ENCODE measurements at regions of chr4 and their contacts with region 1.

Region 1: GRCh38 chr4:70687821-70688794 is at the start of gene UTP3:
- DNase-seq: peak; percentile 93
- ATAC-seq: peak; percentile 93
- H3K4me3 Mint-ChIP-seq: peak within 1 kb of the TSS; percentile 99
- H3K27ac Mint-ChIP-seq: peak within 1 kb of the TSS; percentile 95
- H3K4me1 Mint-ChIP-seq: peaks cover 30% of the 10 kb centered on the region
- H3K27me3 Mint-ChIP-seq: no peaks in the 10 kb centered on the region
- total RNA-seq, gene UTP3: 28.0 to 33.6 TPM

Region 2: GRCh38 chr4:70704331-70705145 is 16.4 kb after region 1 on chr4:
- CTCF ChIA-PET with region 1: interaction called, 39 read pairs
- DNase-seq: peak; percentile 74
- ATAC-seq: peak; percentile 62
- H3K4me3 Mint-ChIP-seq: peak overlapping the region; percentile 77
- H3K27ac Mint-ChIP-seq: peak overlapping the region; percentile 71
- H3K4me1 Mint-ChIP-seq: peaks cover 20% of the 10 kb centered on the region
- H3K27me3 Mint-ChIP-seq: no peaks in the 10 kb centered on the region

Region 3: GRCh38 chr4:70754990-70755688 is 67.0 kb after region 1 on chr4:
- CTCF ChIA-PET with region 1: no interaction called
- DNase-seq: no peak
- ATAC-seq: no peak
- H3K4me3 Mint-ChIP-seq: no peak overlapping the region
- H3K27ac Mint-ChIP-seq: no peak overlapping the region
- H3K4me1 Mint-ChIP-seq: peaks cover 11% of the 10 kb centered on the region
- H3K27me3 Mint-ChIP-seq: no peaks in the 10 kb centered on the region